Activated CD8-positive, alpha-beta memory T cell treated with anti-CD3 and anti-CD28 coated beads, Interleukin-2, amount 10 ng/mL, durations not matched to agents 7 days and 5 days (primary cell): ENCODE measurements at regions of chr3 and their contacts with region 1.

Region 1: GRCh38 chr3:187679638-187680396 is 9.6 kb upstream of the SST start:
- DNase-seq: peak; percentile 74
- ATAC-seq: peak; percentile 76
- H3K4me3 Mint-ChIP-seq: no peak overlapping the region
- H3K27ac Mint-ChIP-seq: no peak overlapping the region
- H3K4me1 Mint-ChIP-seq: peaks cover 5% of the 10 kb centered on the region
- H3K27me3 Mint-ChIP-seq: peaks cover 58% of the 10 kb centered on the region

Region 2: DNA sequence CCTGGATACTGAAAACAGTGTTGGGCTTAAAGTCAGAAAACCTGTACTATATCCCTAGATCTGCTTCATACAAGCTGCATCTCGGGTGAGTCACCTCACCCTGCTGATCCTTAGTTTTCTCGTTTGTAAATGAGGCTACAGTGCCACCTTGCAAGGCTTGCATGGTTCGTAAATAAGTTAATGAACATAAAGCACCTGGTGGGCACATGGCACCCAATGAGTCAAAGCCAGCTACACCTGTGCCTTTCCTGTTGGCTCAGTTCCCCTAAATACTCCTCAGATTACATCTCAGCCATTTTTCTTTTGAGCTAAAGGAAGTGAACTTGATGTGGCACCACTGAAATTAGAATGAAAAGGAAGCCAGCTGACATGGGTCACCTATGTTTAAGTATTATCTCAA is 456.0 kb before region 1 on chr3:
- CTCF ChIA-PET with region 1: interaction called, 39 read pairs
- DNase-seq: no peak
- ATAC-seq: no peak
- H3K4me3 Mint-ChIP-seq: no peak overlapping the region
- H3K27ac Mint-ChIP-seq: no peak overlapping the region
- H3K4me1 Mint-ChIP-seq: no peaks in the 10 kb centered on the region
- H3K27me3 Mint-ChIP-seq: peaks cover 7% of the 10 kb centered on the region

Region 3: GRCh38 chr3:187305881-187306280 is 373.9 kb before region 1 on chr3:
- CTCF ChIA-PET with region 1: interaction called, 14 read pairs
- DNase-seq: no peak
- ATAC-seq: no peak
- H3K4me3 Mint-ChIP-seq: no peak overlapping the region
- H3K27ac Mint-ChIP-seq: no peak overlapping the region
- H3K4me1 Mint-ChIP-seq: no peaks in the 10 kb centered on the region
- H3K27me3 Mint-ChIP-seq: peaks cover 44% of the 10 kb centered on the region

Region 4: DNA sequence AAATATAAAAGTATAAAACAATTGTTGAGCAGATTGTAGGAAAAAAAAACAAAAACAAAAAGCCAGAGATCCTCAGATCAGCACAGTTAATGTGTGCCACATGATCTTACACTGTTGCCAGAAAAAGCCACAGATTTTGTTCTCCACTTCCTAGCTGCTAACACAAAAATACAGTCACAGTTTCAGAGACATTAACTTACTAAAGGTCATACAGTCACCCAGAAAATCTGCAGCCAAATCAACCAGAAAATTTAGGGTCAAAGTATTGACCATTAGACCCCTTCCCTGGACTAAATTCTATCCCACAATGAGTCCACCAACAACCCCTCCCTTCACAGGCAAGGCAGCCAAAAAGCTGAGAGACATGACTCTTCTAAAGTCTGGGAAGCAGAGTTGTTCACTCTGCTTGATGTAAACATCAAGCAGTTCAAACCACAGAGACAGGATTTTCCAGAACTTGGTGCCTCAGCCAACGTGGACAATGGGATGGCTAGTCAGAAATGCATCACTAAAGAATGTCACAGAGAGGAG is 68.8 kb before region 1 on chr3:
- CTCF ChIA-PET with region 1: interaction called, 43 read pairs
- DNase-seq: no peak
- ATAC-seq: no peak
- H3K4me3 Mint-ChIP-seq: no peak overlapping the region
- H3K27ac Mint-ChIP-seq: no peak overlapping the region
- H3K4me1 Mint-ChIP-seq: peaks cover 2% of the 10 kb centered on the region
- H3K27me3 Mint-ChIP-seq: peaks cover 47% of the 10 kb centered on the region

Region 5: DNA sequence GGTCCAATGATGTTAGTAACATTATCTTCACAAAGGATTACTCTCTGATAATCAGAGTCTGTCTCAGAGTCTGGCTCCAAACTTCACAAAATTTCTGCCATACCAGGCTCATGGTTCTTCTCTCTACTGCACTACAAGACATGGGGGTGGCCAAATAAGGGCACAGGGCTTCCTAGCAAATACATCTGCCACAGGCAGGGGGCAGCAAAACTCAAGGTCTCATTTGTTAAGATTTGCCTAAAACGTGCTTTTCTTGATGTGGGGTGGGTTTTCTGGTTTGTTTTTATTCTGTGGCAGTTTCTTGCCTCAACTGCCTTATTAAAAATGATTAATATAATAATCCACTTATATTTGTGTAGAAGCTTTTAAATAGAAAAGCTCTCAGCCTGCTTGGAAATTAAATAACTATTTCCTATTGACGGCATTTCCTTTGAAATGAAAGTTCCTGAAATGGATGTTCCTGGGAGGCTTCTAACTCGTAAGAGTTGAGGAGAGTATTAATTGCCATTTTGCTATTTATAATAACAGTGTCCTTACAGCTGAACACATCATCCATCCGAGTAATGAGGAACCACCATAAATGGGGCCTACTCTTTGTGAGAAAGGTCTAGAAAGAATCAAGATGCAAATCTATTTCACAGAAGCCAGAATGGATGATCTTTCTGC is 63.4 kb before region 1 on chr3:
- CTCF ChIA-PET with region 1: interaction called, 43 read pairs
- DNase-seq: peak; percentile 72
- ATAC-seq: peak; percentile 82
- H3K4me3 Mint-ChIP-seq: no peak overlapping the region
- H3K27ac Mint-ChIP-seq: no peak overlapping the region
- H3K4me1 Mint-ChIP-seq: peaks cover 5% of the 10 kb centered on the region
- H3K27me3 Mint-ChIP-seq: peaks cover 16% of the 10 kb centered on the region

Region 6: GRCh38 chr3:187702507-187703033 is 22.8 kb after region 1 on chr3 and contains the start of gene RTP2:
- CTCF ChIA-PET with region 1: interaction called, 10 read pairs
- DNase-seq: no peak
- ATAC-seq: no peak
- H3K4me3 Mint-ChIP-seq: no peak within 1 kb of the TSS
- H3K27ac Mint-ChIP-seq: no peak within 1 kb of the TSS
- H3K4me1 Mint-ChIP-seq: no peaks in the 10 kb centered on the region
- H3K27me3 Mint-ChIP-seq: peaks cover 5% of the 10 kb centered on the region
- total RNA-seq, gene RTP2: not detected

Region 7: DNA sequence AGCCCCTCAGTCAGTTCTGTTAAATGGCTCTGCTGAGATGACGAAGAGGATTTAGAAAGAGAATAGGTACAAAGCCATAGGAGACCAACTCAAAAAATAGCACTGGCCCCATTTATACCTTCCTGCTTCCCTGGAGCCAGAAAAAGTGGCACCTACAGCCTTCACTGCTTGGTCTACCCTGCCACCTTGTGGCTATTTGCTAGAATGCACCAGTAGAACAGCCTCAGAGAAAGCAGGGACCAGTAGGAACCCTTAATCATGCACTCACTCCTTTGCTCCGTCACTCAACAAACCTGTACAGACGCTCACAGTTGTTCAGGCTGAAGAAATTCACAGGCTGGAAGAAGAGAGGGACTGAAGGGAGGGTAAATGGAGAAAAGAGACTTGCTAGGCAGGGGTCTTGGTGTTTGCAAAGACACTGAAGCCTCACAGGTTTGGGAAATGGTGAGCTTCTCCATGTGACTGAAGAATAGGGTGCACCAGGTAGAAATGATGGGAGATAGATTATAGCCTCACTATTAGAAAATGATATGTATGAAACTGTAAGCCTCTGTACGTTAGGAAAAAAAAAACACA is 34.7 kb after region 1 on chr3:
- CTCF ChIA-PET with region 1: interaction called, 24 read pairs
- DNase-seq: peak; percentile 82
- ATAC-seq: peak; percentile 85
- H3K4me3 Mint-ChIP-seq: no peak overlapping the region
- H3K27ac Mint-ChIP-seq: no peak overlapping the region
- H3K4me1 Mint-ChIP-seq: peaks cover 17% of the 10 kb centered on the region
- H3K27me3 Mint-ChIP-seq: peaks cover 6% of the 10 kb centered on the region

Region 8: DNA sequence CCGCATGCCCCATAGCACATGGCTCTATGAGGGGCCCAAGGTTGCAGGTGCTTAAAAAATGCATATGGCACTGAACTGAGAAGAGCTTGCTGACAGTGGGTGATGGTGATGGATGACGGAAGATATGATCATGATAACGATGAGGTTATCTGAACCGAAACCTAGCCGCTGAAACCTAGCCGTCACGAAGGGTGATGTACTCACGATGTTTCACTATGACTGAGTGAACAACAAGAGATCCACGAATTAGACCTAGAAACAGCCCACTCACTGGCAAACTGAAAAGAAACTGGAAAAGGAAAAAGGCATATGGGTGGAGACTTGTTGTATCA is 123.1 kb after region 1 on chr3:
- CTCF ChIA-PET with region 1: no interaction called
- DNase-seq: peak; percentile 93
- ATAC-seq: peak; percentile 76
- H3K4me3 Mint-ChIP-seq: peak overlapping the region; percentile 49
- H3K27ac Mint-ChIP-seq: peak overlapping the region; percentile 100
- H3K4me1 Mint-ChIP-seq: peaks cover 93% of the 10 kb centered on the region
- H3K27me3 Mint-ChIP-seq: no peaks in the 10 kb centered on the region

Region 9: DNA sequence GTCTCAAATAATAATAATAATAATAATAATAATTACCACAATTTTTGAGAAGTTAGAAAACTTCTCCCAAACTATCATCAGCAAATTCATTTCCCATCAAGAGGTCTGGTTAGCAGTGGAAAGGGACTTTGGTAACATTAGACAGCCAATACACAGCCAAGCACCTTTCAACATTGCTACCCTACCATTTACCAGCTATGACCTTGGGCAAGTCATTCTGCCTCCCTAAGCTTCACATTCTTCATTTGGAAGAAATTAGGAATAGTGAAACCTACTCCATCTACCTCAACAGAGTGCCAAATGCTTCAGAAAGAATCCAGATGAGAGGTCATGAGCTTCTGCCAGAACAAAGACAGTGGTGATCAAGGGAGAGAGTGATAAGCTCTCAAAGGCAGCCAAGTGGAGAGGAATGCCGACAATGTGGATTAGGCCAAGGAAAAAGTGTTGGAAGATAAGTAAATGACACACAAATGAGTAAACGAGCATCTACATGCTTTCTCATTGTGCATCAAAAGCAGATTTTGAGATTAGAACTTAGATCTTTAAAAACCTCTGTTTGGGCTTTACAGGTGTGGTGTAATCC is 431.3 kb after region 1 on chr3:
- CTCF ChIA-PET with region 1: no interaction called
- DNase-seq: no peak
- ATAC-seq: no peak
- H3K4me3 Mint-ChIP-seq: no peak overlapping the region
- H3K27ac Mint-ChIP-seq: no peak overlapping the region
- H3K4me1 Mint-ChIP-seq: peaks cover 4% of the 10 kb centered on the region
- H3K27me3 Mint-ChIP-seq: no peaks in the 10 kb centered on the region